Sigmoid colon (tissue), 7 donors: ENCODE measurements at regions of chr22 and their contacts with region 1.

Region 1: DNA sequence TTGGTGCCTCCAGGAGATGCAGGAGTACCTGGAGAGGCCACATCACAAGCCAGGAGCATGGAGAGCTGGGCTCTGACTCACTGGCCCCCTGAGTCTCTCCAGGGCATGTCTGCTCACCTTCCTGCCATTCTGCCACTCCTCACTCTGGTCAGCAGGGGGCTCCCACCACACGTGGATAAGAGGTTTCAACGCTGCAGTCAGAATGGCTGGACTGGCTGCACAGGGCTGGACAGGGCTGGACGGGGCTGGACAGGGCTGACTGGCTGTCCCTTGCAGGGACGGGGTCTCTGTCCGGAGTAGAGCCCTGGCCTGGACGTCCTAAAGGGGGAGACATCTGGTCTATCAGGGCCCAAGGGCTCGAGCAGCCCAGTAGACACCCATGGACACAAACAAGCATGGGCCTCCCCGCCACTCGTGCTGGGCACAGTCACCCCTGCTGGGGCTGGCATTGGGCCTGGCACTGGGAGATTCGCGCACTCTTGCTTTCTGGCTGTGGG is 34.6 kb downstream of the CYTH4 start:
- DNase-seq: peak; percentile 86
- H3K4me3 ChIP-seq: no peak overlapping the region
- H3K27ac ChIP-seq: no peak overlapping the region
- H3K4me1 ChIP-seq: no peaks in the 10 kb centered on the region
- H3K27me3 ChIP-seq: peaks cover 0 to 9% (median 5%) of the 10 kb centered on the region in 3 donors
- CTCF ChIP-seq: peak; percentile 73 to 81 (median 76)
- EP300 ChIP-seq: no peak
- POLR2A ChIP-seq: no peak

Region 2: GRCh38 chr22:37218771-37219411 is 98.0 kb before region 1 on chr22:
- intact Hi-C with region 1: no loop called
- DNase-seq: no peak
- H3K4me3 ChIP-seq: no peak overlapping the region
- H3K27ac ChIP-seq: no peak overlapping the region
- H3K4me1 ChIP-seq: no peaks in the 10 kb centered on the region
- H3K27me3 ChIP-seq: no peaks in the 10 kb centered on the region
- CTCF ChIP-seq: no peak
- EP300 ChIP-seq: no peak
- POLR2A ChIP-seq: no peak

Region 3: DNA sequence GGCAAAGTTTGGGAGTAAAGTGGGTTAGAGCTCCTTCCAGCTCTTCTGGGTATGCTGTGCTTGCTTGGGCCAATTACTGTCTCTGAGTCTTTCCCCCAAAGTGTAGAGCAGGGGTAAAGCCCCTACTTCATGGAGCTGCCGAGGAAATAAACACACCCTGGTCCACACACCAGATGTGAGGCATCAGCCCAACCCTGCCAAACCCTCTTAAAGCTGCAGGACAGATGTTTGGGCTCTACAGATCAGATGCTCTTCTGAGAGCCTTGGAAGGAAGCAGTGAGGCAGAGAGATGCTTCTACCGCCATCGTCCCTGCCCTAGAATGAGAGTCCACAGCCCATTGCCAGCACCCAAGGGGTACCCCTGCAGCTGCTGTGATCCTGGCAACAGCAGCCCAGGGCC is 45.7 kb after region 1 on chr22:
- intact Hi-C with region 1: no loop called
- DNase-seq: no peak
- H3K4me3 ChIP-seq: no peak overlapping the region
- H3K27ac ChIP-seq: no peak overlapping the region
- H3K4me1 ChIP-seq: no peaks in the 10 kb centered on the region
- H3K27me3 ChIP-seq: peaks cover 0 to 8% (median 0%) of the 10 kb centered on the region in 3 donors
- CTCF ChIP-seq: no peak
- EP300 ChIP-seq: no peak
- POLR2A ChIP-seq: no peak

Region 4: GRCh38 chr22:37457093-37457893 is 140.4 kb after region 1 on chr22:
- intact Hi-C with region 1: loop called (anchors 2 kb)
- DNase-seq: no peak
- H3K4me3 ChIP-seq: no peak overlapping the region
- H3K27ac ChIP-seq: no peak overlapping the region
- H3K4me1 ChIP-seq: no peaks in the 10 kb centered on the region
- H3K27me3 ChIP-seq: peaks cover 10 to 87% (median 25%) of the 10 kb centered on the region in 3 donors
- CTCF ChIP-seq: peak; percentile 40 to 71 (median 61)
- EP300 ChIP-seq: no peak
- POLR2A ChIP-seq: no peak

Region 5: GRCh38 chr22:37599153-37599552 is 282.2 kb after region 1 on chr22:
- intact Hi-C with region 1: loop called (anchors 10 kb)
- DNase-seq: no peak
- H3K4me3 ChIP-seq: no peak overlapping the region
- H3K27ac ChIP-seq: no peak overlapping the region
- H3K4me1 ChIP-seq: no peaks in the 10 kb centered on the region
- H3K27me3 ChIP-seq: peaks cover 0 to 12% (median 0%) of the 10 kb centered on the region in 3 donors
- CTCF ChIP-seq: no peak
- EP300 ChIP-seq: no peak
- POLR2A ChIP-seq: no peak